HCT116 (cell line): ENCODE measurements at regions of chr20 and their contacts with region 1.

Region 1: GRCh38 chr20:13546497-13547131 is 92.1 kb downstream of the TASP1 start:
- DNase-seq: peak; percentile 69
- ATAC-seq: peak; percentile 86
- H3K4me3 ChIP-seq: no peak overlapping the region
- H3K27ac ChIP-seq: no peak overlapping the region
- H3K4me1 ChIP-seq: no peaks in the 10 kb centered on the region
- H3K27me3 ChIP-seq: no peaks in the 10 kb centered on the region
- CTCF ChIP-seq: peak; percentile 53 to 89 (median 63); a peak in 5 of 6 replicates
- POLR2A ChIP-seq: no peak
- RAD21 ChIP-seq: peak; percentile 68

Region 2: GRCh38 chr20:13325033-13325432 is 221.6 kb before region 1 on chr20:
- CTCF ChIA-PET with region 1: interaction called, 39 read pairs
- POLR2A ChIA-PET with region 1: no interaction called
- RAD21 ChIA-PET with region 1: interaction called, 3 to 4 read pairs
- intact Hi-C with region 1: loop called (anchors 1 kb)
- DNase-seq: peak; percentile 18
- ATAC-seq: peak; percentile 86
- H3K4me3 ChIP-seq: no peak overlapping the region
- H3K27ac ChIP-seq: no peak overlapping the region
- H3K4me1 ChIP-seq: no peaks in the 10 kb centered on the region
- H3K27me3 ChIP-seq: no peaks in the 10 kb centered on the region
- CTCF ChIP-seq: peak; percentile 46 to 74 (median 56); a peak in 5 of 6 replicates
- POLR2A ChIP-seq: no peak
- RAD21 ChIP-seq: peak; percentile 57

Region 3: GRCh38 chr20:13533946-13534345 is 12.7 kb before region 1 on chr20:
- CTCF ChIA-PET with region 1: interaction called, 22 read pairs
- POLR2A ChIA-PET with region 1: interaction called, 3 read pairs
- RAD21 ChIA-PET with region 1: no interaction called
- intact Hi-C with region 1: no loop called
- DNase-seq: no peak
- ATAC-seq: no peak
- H3K4me3 ChIP-seq: no peak overlapping the region
- H3K27ac ChIP-seq: no peak overlapping the region
- H3K4me1 ChIP-seq: no peaks in the 10 kb centered on the region
- H3K27me3 ChIP-seq: no peaks in the 10 kb centered on the region
- CTCF ChIP-seq: no peak
- POLR2A ChIP-seq: no peak
- RAD21 ChIP-seq: no peak